Endothelial cell of umbilical vein (primary cell): ENCODE measurements at regions of chr5 and their contacts with region 1.

Region 1: DNA sequence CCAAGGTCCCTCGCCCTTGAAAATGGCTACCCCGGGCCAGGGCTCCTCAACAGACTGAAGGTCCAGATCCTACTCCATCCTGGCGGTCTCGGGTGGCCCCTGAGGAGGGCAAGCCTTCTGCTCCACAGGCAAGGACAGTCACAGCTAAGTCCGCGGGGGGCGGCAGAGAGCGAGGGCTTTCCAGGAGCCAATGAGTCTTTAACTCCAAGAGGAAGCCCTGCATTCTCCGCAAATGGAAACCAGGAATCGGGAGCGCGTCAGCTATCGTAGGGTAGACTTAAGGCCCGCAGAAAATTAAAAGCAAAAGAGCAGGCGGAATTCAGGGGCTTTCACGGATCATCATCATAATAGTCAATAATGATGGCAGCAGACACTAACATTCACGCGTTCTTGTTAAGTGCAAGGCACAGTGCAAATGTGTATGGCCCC is 87.8 kb upstream of the TNFAIP8 start:
- DNase-seq: peak; percentile 97
- H3K4me3 ChIP-seq: peak overlapping the region; percentile 73 to 99 (median 96)
- H3K27ac ChIP-seq: peak overlapping the region; percentile 75
- H3K4me1 ChIP-seq: peaks cover 9% of the 10 kb centered on the region
- H3K27me3 ChIP-seq: peaks cover 2 to 7% of the 10 kb centered on the region in 2 experiments
- CTCF ChIP-seq: peak; percentile 62 to 71
- POLR2A ChIP-seq: no peak

Region 2: GRCh38 chr5:118987988-118988865 is 279.7 kb before region 1 on chr5 and contains the start of gene DTWD2:
- CTCF ChIA-PET with region 1: interaction called, 13 read pairs
- POLR2A ChIA-PET with region 1: no interaction called
- dilution Hi-C with region 1: no loop called
- intact Hi-C with region 1: loop called (anchors 1 kb)
- DNase-seq: peak; percentile 96
- H3K4me3 ChIP-seq: peak within 1 kb of the TSS; percentile 37 to 74 (median 56)
- H3K27ac ChIP-seq: no peak within 1 kb of the TSS
- H3K4me1 ChIP-seq: peaks cover 6% of the 10 kb centered on the region
- H3K27me3 ChIP-seq: peaks cover 0 to 2% of the 10 kb centered on the region in 2 experiments
- CTCF ChIP-seq: peak; percentile 96 to 97
- POLR2A ChIP-seq: no peak
- total RNA-seq, gene DTWD2: 1.1 and 2.3 TPM in 2 replicates

Region 3: GRCh38 chr5:119302916-119303897 is 35.2 kb after region 1 on chr5:
- CTCF ChIA-PET with region 1: interaction called, 3 read pairs
- POLR2A ChIA-PET with region 1: interaction called, 5 read pairs
- dilution Hi-C with region 1: no loop called
- intact Hi-C with region 1: loop called (anchors 1 kb)
- DNase-seq: peak; percentile 93
- H3K4me3 ChIP-seq: no peak overlapping the region
- H3K27ac ChIP-seq: peak overlapping the region; percentile 79
- H3K4me1 ChIP-seq: peaks cover 35% of the 10 kb centered on the region
- H3K27me3 ChIP-seq: no peaks in the 10 kb centered on the region
- CTCF ChIP-seq: no peak
- POLR2A ChIP-seq: no peak

Region 4: GRCh38 chr5:119332978-119333401 is 65.0 kb after region 1 on chr5:
- CTCF ChIA-PET with region 1: interaction called, 13 read pairs
- POLR2A ChIA-PET with region 1: interaction called, 3 read pairs
- dilution Hi-C with region 1: no loop called
- intact Hi-C with region 1: loop called (anchors 1 kb)
- DNase-seq: no peak
- H3K4me3 ChIP-seq: no peak overlapping the region
- H3K27ac ChIP-seq: no peak overlapping the region
- H3K4me1 ChIP-seq: no peaks in the 10 kb centered on the region
- H3K27me3 ChIP-seq: no peaks in the 10 kb centered on the region
- CTCF ChIP-seq: no peak
- POLR2A ChIP-seq: no peak

Region 5: GRCh38 chr5:119389288-119390030 is 121.5 kb after region 1 on chr5:
- CTCF ChIA-PET with region 1: no interaction called
- POLR2A ChIA-PET with region 1: no interaction called
- dilution Hi-C with region 1: no loop called
- intact Hi-C with region 1: loop called (anchors 5 kb)
- DNase-seq: no peak
- H3K4me3 ChIP-seq: no peak overlapping the region
- H3K27ac ChIP-seq: no peak overlapping the region
- H3K4me1 ChIP-seq: peaks cover 24% of the 10 kb centered on the region
- H3K27me3 ChIP-seq: no peaks in the 10 kb centered on the region
- CTCF ChIP-seq: no peak
- POLR2A ChIP-seq: no peak